Lower lobe of right lung (tissue), 2 donors: ENCODE measurements at regions of chr20 and their contacts with region 1.

Region 1: GRCh38 chr20:4720041-4720976 is 1.4 kb upstream of the PRND start:
- DNase-seq: peak; percentile 82
- ATAC-seq: peak; percentile 88
- H3K4me3 ChIP-seq: no peak overlapping the region
- H3K27ac ChIP-seq: peak overlapping the region; percentile 75
- H3K4me1 ChIP-seq: peaks cover 16% of the 10 kb centered on the region
- H3K27me3 ChIP-seq: no peaks in the 10 kb centered on the region
- CTCF ChIP-seq: peak; percentile 73

Region 2: GRCh38 chr20:4573564-4574355 is 146.5 kb before region 1 on chr20:
- intact Hi-C with region 1: no loop called
- DNase-seq: no peak
- ATAC-seq: no peak
- H3K4me3 ChIP-seq: no peak overlapping the region
- H3K27ac ChIP-seq: no peak overlapping the region
- H3K4me1 ChIP-seq: no peaks in the 10 kb centered on the region
- H3K27me3 ChIP-seq: peaks cover 10% of the 10 kb centered on the region
- CTCF ChIP-seq: no peak

Region 3: DNA sequence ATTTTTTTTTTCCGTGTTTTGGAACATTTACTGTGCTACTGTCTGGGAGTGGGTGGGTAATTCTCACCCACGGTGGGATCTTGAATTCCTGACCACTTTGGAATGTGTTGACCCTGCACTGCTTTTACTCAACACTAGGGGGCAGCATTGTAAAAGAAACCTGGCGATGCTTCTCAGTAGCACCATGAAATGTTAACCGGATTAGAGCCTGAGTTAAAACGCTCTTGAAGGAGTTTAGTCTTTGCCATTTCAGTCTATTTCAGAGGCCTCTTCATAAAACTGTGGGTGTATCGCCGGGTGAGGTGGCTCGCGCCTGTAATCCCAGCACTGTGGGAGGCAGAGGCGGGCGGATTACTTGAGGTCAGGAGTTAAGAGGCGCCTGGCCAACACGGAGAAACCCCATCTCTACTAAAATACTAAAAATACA is 113.0 kb before region 1 on chr20:
- intact Hi-C with region 1: loop called (anchors 5 kb)
- DNase-seq: no peak
- ATAC-seq: peak; percentile 83 to 87
- H3K4me3 ChIP-seq: no peak overlapping the region
- H3K27ac ChIP-seq: no peak overlapping the region
- H3K4me1 ChIP-seq: no peaks in the 10 kb centered on the region
- H3K27me3 ChIP-seq: peaks cover 4% of the 10 kb centered on the region
- CTCF ChIP-seq: peak; percentile 94

Region 4: DNA sequence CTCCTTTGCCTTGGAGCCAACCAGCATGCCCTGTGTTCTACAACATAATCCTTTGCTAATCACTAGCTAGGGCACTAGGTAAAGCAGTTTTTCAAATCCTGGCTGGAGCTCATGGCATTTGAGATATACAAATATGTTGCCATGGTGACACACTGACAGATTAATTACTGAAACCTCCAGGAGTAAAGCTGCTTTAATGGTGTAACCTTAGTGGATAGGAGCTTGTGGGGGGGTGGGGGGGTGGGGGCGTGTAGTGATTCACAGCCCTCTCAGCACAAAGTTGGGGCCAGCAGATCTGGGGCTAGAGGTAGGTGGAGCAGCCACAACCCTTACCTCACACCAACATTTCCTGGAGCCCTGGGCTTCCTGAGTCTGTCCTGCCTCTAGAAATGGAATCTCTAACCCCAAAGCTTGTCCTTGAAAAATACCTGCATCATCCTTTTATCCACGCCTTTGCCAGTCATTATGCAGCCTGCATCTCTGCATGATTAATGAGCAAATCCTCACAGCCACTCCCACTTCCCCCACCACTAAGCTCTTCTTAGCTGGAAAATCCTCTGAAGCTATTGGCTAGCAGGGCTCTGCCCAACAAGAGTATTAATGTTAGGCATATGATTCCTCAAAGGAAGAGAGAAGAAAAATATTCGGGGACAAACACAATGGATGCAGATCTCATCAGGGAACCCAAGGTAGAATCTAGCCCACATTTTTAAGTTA is 83.1 kb before region 1 on chr20:
- intact Hi-C with region 1: no loop called
- DNase-seq: no peak
- ATAC-seq: no peak
- H3K4me3 ChIP-seq: no peak overlapping the region
- H3K27ac ChIP-seq: no peak overlapping the region
- H3K4me1 ChIP-seq: peaks cover 4% of the 10 kb centered on the region
- H3K27me3 ChIP-seq: no peaks in the 10 kb centered on the region
- CTCF ChIP-seq: no peak